RWPE1 (cell line): ENCODE measurements at regions of chr1 and their contacts with region 1.

Region 1: GRCh38 chr1:50332941-50333594 is 90.2 kb downstream of the DMRTA2 start:
- DNase-seq: peak; percentile 41
- H3K27ac ChIP-seq: no peak overlapping the region
- CTCF ChIP-seq: peak; percentile 68

Region 2: GRCh38 chr1:50193002-50193401 is 140.1 kb before region 1 on chr1:
- CTCF ChIA-PET with region 1: no interaction called
- POLR2A ChIA-PET with region 1: no interaction called
- DNase-seq: no peak
- H3K27ac ChIP-seq: no peak overlapping the region
- CTCF ChIP-seq: no peak

Region 3: DNA sequence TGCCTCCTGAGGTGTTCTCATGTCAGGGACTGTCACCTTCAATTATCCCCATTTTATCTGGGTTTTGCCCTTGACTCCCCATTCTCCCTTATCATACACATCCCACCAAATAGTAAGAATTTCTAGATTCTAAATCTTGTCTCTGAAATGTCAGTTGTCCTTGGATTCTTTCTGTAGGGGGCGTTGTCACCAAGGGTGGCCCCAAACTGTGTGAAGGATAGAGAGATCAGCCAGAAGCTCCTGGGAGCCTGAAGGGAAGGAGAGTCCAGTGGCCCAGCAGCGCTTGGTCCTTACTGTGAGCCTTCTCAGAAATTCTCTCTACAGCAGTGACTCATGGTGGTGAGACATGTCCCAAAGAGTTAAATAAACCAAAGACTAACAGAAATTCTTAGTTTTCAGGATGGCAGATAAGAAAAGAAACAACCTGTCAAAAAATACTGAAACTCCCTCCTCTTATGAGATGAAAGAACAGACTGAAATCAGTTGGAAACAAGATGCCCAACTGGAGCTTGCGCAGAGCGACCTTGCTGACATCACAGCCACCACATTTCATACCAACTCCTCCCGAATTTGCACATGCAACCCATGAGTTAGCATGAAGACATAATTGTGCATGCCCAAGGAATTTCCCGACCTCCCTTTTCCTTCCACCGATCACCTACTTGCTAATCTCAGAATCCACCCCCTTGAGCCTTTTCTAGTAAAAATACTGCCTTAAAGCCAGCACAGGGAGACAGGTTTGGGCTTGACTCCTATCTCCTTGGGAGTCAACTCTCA is 114.5 kb before region 1 on chr1:
- CTCF ChIA-PET with region 1: no interaction called
- POLR2A ChIA-PET with region 1: no interaction called
- DNase-seq: no peak
- H3K27ac ChIP-seq: no peak overlapping the region
- CTCF ChIP-seq: no peak

Region 4: GRCh38 chr1:50343323-50343722 is 10.3 kb after region 1 on chr1:
- CTCF ChIA-PET with region 1: interaction called, 16 read pairs
- POLR2A ChIA-PET with region 1: no interaction called
- DNase-seq: no peak
- H3K27ac ChIP-seq: no peak overlapping the region
- CTCF ChIP-seq: no peak

Region 5: DNA sequence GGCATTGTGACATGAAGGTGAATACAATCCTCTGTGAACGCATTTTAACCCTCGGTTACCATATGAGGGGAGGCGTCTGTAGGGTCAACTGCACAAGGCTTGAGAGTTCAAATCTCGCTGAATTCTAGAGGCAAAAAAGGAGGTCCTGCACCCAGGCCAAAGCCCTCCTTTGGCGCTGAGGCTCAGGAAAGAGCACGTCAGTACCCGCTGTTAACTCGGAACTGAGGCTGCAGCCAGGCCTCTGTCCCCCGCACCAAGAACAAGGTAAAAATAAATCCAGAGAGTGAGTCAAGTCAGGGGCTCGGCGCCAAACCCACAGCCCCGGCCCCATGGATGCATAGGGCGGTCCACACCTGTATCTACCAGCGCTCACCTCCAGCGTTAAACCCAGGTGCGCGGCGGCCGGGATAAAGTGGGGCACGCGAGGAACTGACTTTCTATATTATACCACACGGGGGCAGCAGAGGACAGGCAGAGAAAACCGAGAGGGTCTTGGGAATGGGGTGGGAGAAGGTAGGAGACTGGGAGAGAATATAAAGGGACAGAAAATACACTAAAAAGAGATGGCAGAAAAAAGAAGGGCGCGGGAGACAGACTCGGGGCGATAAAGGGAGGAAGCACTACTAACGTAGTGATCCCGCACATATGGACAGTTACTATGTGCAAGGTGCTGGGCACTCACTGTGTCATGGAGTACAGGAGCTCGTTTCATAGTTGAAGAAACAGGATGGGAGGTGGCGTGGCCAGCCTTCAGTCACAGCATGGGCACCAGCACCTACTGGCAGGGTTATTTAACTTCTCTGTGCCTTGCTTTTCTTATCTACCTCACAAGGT is 35.3 kb after region 1 on chr1:
- CTCF ChIA-PET with region 1: no interaction called
- POLR2A ChIA-PET with region 1: no interaction called
- DNase-seq: peak; percentile 55
- H3K27ac ChIP-seq: no peak overlapping the region
- CTCF ChIP-seq: peak; percentile 83